ENCODE measurements at regions of chr1 and their contacts with region 1.

Region 1: DNA sequence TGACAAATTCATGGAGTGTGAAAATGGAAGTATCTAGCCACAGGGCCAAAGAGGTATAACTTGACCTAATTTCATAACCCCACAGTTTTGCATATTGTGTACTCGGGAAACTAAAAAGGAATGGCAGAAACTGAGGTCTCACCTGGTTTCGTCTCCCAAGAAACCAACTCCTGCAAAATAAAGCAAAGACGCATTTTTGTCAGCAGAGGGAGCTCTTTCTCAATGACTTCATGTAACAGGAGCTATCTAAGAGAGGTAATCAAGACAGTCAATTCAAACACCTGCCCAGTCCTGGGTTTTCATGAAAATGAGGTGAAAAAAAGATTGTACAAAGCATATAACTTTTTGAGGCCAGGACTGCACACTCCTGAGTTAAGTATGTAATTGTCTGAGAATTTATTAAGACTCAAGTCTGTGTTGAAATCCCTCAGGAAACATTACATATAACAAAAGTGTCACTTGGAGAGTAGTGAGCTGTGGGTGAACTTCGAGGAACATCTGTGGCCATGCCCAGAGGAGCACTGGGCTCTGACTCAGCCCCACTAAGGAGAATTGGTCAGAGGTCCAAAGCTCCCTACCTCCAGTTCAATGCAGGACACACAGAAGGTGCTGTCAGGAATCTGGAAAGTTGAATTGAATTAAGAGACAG is 17.6 kb downstream of the FCRL4 start:
- DNase-seq: peak; percentile 65

Region 2: DNA sequence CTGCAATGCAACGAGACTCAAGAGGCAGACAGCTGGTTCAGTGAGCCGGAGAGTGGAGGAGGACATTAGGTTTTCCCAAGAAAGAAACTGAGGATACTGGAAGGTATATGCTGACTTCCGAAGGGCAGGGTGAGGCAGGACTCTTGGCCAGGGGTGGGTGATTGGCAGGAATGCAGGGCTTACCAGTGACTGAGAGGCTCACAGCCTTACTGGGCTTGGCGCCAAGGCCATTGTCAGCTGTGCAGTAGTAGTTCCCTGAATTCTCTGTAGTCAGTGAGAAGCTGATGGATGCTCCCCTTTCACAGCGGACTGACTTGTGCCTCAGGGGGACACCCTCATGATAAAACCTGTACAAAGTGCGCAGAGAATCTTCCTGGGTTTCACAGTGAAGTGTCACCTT is 37.6 kb before region 1 on chr1:
- in situ Hi-C with region 1: no loop called
- DNase-seq: no peak

Region 3: GRCh38 chr1:157766792-157767191 is 186.5 kb after region 1 on chr1:
- in situ Hi-C with region 1: no loop called
- DNase-seq: no peak

Region 4: DNA sequence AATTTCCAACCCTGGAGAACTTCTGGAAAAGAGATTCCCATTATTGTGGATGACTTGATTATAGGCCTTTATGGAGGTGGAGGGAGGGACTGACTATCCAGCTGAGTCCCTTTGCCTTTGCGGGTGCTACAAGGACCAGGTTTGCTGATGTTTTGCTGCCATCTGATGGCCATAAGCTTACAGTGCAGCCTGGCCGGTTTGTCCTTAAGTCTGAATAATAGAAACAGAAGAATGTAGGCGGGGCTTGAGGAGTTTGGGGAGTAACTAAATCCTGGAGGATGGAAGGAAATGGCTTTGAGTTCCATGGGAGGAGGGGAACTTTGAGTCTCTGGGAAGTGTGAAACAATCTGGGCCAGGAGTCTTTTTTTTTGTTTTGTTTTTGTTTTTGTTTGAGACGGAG is 544.7 kb after region 1 on chr1:
- in situ Hi-C with region 1: loop called (anchors 25 kb)
- DNase-seq: peak; percentile 89

Measured in KBM-7 (cell line).